Caco-2 (cell line): ENCODE measurements at regions of chr4 and their contacts with region 1.

Region 1: DNA sequence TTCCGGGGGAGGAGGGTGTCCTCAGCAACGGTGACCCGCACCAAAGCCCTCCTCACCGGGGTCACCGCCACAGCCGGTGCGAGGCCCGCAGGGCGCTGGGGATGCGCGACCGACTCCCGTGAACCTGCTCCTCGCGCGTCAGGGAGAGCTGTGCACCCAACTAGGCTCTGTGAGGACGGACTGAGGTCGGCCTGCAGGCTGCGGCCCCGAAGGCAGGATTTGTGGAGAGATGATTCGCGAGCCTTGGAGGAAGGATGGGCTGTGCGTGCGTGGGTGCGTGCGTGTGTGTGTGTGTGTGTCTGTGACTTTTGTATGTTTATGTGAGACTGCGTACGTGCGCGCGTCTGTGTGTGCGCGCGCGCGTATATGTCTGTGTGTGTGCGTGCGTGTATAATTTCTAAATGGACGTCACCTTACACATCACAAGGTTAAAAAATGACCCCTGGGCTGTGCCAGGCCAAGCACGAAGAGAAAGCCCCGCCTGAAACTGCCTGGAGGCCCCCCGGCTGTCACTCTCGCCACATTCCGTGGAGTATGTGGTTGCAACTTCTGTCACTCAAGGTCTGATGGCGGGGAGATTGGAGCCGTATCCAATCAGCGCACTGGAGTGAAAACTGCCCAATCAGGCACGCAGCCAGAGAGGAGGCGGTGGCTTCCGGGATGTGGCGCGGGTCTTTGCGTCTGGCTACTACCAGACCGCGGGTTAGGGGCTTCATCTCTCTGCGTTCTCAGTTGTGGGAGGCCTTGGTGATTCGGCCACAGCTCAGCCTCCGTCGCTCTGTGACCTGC is at the start of gene ZNF141:
- DNase-seq: peak; percentile 95 to 97
- H3K4me3 ChIP-seq: peak within 1 kb of the TSS; percentile 97
- H3K4me3 Mint-ChIP-seq: peak within 1 kb of the TSS; percentile 84
- H3K27ac Mint-ChIP-seq: peak within 1 kb of the TSS; percentile 96
- H3K4me1 ChIP-seq: 0 out of 2 replicates have a peak, but pooled peaks cover 4% of the 10 kb centered on the region
- H3K4me1 Mint-ChIP-seq: no peaks in the 10 kb centered on the region
- H3K27me3 ChIP-seq: no peaks in the 10 kb centered on the region
- H3K27me3 Mint-ChIP-seq: no peaks in the 10 kb centered on the region
- CTCF ChIP-seq: no peak
- total RNA-seq, gene ZNF141: 28.4 and 32.5 TPM in 2 replicates

Region 2: GRCh38 chr4:124275-125081 is 212.9 kb before region 1 on chr4 and contains the start of gene ZNF718:
- CTCF ChIA-PET with region 1: no interaction called
- POLR2A ChIA-PET with region 1: interaction called, 3 read pairs
- intact Hi-C with region 1: loop called (anchors 1 kb)
- DNase-seq: peak; percentile 94 to 96
- H3K4me3 ChIP-seq: peak within 1 kb of the TSS; percentile 79
- H3K4me3 Mint-ChIP-seq: peak within 1 kb of the TSS; percentile 99
- H3K27ac Mint-ChIP-seq: peak within 1 kb of the TSS; percentile 100
- H3K4me1 ChIP-seq: 0 out of 2 replicates have a peak, but pooled peaks cover 4% of the 10 kb centered on the region
- H3K4me1 Mint-ChIP-seq: no peaks in the 10 kb centered on the region
- H3K27me3 ChIP-seq: no peaks in the 10 kb centered on the region
- H3K27me3 Mint-ChIP-seq: no peaks in the 10 kb centered on the region
- CTCF ChIP-seq: no peak
- total RNA-seq, gene ZNF718: 13.0 and 13.2 TPM in 2 replicates

Region 3: GRCh38 chr4:404006-404405 is 66.7 kb after region 1 on chr4:
- CTCF ChIA-PET with region 1: no interaction called
- POLR2A ChIA-PET with region 1: no interaction called
- intact Hi-C with region 1: no loop called
- DNase-seq: no peak
- H3K4me3 ChIP-seq: no peak overlapping the region
- H3K4me3 Mint-ChIP-seq: no peak overlapping the region
- H3K27ac Mint-ChIP-seq: no peak overlapping the region
- H3K4me1 ChIP-seq: no peaks in the 10 kb centered on the region
- H3K4me1 Mint-ChIP-seq: no peaks in the 10 kb centered on the region
- H3K27me3 ChIP-seq: no peaks in the 10 kb centered on the region
- H3K27me3 Mint-ChIP-seq: no peaks in the 10 kb centered on the region
- CTCF ChIP-seq: no peak

Region 4: DNA sequence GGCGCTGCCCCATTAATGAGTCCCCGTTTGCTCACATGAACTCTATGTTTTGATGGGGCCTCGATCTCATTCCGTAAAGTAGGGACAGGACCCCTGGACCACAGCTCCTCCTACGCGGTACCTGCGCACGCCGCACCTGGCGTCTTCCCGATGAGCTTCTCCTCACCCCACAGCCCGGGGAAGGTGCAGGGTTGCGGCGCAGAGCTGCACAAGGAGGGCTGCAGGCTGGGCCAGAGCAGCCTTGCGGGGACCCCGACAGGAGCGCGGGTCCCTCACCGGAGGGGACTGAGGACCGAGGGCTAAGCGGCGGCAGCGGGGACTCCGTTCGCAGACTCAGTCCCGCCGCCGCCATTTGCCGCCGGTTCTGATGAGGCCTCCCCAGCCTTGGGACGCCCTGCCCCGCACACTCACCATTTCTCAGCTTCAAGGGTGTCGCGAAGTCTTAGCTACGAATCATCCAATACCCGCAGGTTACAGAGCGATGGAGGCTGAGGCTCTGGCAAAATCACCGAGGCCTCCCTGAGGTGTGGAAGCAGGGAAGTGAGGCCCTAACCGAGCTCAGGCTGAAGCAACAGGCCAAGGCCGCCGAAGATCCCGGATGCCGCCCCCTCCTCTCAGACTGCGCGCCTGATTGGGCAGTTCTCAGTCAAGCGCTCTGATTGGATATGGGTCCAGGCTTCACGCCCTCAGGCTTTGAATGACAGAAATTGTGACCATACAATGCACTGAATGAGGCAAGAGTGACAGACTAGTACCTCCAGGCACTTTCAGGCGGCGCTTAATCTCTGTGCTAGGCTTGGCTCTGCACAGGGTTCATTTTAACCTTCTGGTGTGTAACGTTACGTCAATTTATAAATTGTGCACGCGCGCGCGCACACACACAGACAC is 136.5 kb after region 1 on chr4:
- CTCF ChIA-PET with region 1: no interaction called
- POLR2A ChIA-PET with region 1: no interaction called
- intact Hi-C with region 1: loop called (anchors 10 kb)
- DNase-seq: peak; percentile 97
- H3K4me3 ChIP-seq: peak overlapping the region; percentile 64
- H3K4me3 Mint-ChIP-seq: peak overlapping the region; percentile 92
- H3K27ac Mint-ChIP-seq: peak overlapping the region; percentile 94
- H3K4me1 ChIP-seq: no peaks in the 10 kb centered on the region
- H3K4me1 Mint-ChIP-seq: peaks cover 5% of the 10 kb centered on the region
- H3K27me3 ChIP-seq: no peaks in the 10 kb centered on the region
- H3K27me3 Mint-ChIP-seq: no peaks in the 10 kb centered on the region
- CTCF ChIP-seq: no peak